Pancreas (tissue), 10 donors: ENCODE measurements at regions of chr5 and their contacts with region 1.

Region 1: GRCh38 chr5:149561848-149562247 is 10.6 kb upstream of the CSNK1A1 start:
- DNase-seq: no peak
- ATAC-seq: peak in 3 of 4 donors; percentile 42 to 71 (median 54)
- H3K4me3 ChIP-seq: no peak overlapping the region
- H3K27ac ChIP-seq: peak overlapping the region in 1 of 4 donors; percentile 6
- H3K4me1 ChIP-seq: peaks cover 0 to 4% (median 0%) of the 10 kb centered on the region in 3 donors
- H3K27me3 ChIP-seq: no peaks in the 10 kb centered on the region
- CTCF ChIP-seq: no peak

Region 2: GRCh38 chr5:148826053-148826738 is 735.7 kb before region 1 on chr5 and contains the start of gene ADRB2:
- intact Hi-C with region 1: no loop called
- DNase-seq: peak; percentile 91 to 97 (median 94)
- ATAC-seq: peak; percentile 97 to 99 (median 98)
- H3K4me3 ChIP-seq: peak within 1 kb of the TSS; percentile 26 to 61 (median 43)
- H3K27ac ChIP-seq: peak within 1 kb of the TSS; percentile 61 to 92 (median 78)
- H3K4me1 ChIP-seq: peaks cover 0 to 5% (median 0%) of the 10 kb centered on the region in 3 donors
- H3K27me3 ChIP-seq: no peaks in the 10 kb centered on the region
- CTCF ChIP-seq: no peak
- total RNA-seq, gene ADRB2: 0.09 to 1.1 (median 0.40) TPM

Region 3: GRCh38 chr5:149381987-149382340 is 179.9 kb before region 1 on chr5:
- intact Hi-C with region 1: loop called in 1 of 3 experiments (anchors 5 kb)
- DNase-seq: peak; percentile 46 to 89 (median 74)
- ATAC-seq: peak; percentile 81 to 94 (median 91)
- H3K4me3 ChIP-seq: no peak overlapping the region
- H3K27ac ChIP-seq: no peak overlapping the region
- H3K4me1 ChIP-seq: no peaks in the 10 kb centered on the region
- H3K27me3 ChIP-seq: no peaks in the 10 kb centered on the region
- CTCF ChIP-seq: peak; percentile 82 to 90 (median 87)

Region 4: GRCh38 chr5:149442563-149443182 is 119.2 kb before region 1 on chr5:
- intact Hi-C with region 1: loop called (anchors 5 to 10 kb)
- DNase-seq: peak; percentile 74 to 98 (median 89)
- ATAC-seq: peak; percentile 93 to 98 (median 96)
- H3K4me3 ChIP-seq: no peak overlapping the region
- H3K27ac ChIP-seq: peak overlapping the region; percentile 6 to 49 (median 38)
- H3K4me1 ChIP-seq: no peaks in the 10 kb centered on the region
- H3K27me3 ChIP-seq: no peaks in the 10 kb centered on the region
- CTCF ChIP-seq: peak; percentile 87 to 92 (median 90)

Region 5: DNA sequence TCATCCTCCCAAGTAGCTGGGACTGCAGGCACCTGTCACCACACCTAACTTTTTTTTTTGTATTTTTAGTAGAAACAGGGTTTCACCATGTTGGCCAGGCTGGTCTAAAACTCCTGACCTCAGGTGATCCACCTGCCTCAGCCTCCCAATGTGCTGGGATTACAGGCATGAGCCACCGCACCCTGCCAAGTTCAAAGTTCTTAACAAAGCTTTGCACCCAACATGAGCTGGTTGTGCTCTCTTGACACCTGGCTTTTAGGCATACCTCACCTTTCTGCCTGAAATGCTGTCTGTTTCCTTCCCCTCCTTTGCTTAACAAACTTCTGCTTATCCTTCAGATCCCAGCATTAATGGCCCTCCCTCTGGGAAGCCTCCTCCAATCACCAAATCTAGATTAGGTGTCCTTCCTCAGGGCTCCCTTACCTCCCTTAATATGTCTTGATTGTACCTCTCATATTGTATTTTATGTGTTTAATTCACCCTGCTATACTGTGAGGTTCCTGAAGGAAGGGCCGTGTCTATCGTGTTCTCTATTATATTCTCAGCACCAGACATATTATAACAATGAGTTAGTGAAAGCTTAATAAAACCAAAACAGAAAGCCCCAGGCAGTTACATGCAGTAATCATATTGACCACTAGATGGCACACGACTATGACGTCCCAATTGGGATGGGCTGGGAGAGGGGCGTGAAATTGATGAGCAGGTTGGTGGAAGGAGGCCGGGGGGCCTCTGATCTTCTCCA is 105.4 kb after region 1 on chr5:
- intact Hi-C with region 1: no loop called
- DNase-seq: no peak
- ATAC-seq: peak in 2 of 4 donors; percentile 60 to 73
- H3K4me3 ChIP-seq: no peak overlapping the region
- H3K27ac ChIP-seq: no peak overlapping the region
- H3K4me1 ChIP-seq: no peaks in the 10 kb centered on the region
- H3K27me3 ChIP-seq: no peaks in the 10 kb centered on the region
- CTCF ChIP-seq: peak; percentile 34 to 54 (median 52)